SK-N-SH (cell line): ENCODE measurements at regions of chr10 and their contacts with region 1.

Region 1: DNA sequence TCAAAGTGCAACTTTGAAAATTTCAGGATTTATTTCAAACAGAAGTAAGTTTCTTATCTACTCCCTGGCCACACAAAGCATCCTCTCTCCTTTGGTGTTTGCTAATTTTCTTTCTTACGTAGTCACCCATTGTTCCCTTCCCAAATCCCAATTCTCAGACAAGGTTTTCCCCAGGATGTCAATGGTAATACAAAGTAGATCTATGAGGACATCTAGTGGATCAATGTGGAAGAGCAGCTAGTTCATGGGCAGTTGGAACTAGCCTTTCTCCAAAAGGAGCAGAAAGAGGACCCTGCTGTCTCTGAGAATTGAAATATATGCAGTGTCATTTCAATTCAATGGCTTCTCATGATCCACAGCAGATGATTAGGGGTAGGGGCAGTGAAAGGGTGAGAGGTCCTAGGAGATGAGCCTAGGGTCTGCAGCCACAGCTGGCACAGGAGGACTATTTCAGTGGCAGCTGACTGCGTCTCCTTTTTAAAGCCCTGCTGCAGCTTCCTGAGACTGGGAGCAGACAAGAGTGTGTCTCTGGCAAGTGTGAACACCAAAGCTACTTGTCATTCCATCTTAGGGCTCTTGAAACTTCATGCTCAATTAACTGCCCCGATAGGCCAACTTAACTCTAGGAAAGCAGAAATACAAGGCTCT is 632.6 kb downstream of the KCNMA1 start:
- DNase-seq: peak; percentile 52
- H3K4me3 ChIP-seq: no peak overlapping the region; a peak in 1 of 4 replicates
- H3K27ac ChIP-seq: peak overlapping the region in 1 of 2 experiments; percentile 82; a peak in 2 of 4 replicates
- H3K4me1 ChIP-seq: peaks cover 0 to 2% of the 10 kb centered on the region in 2 experiments; a peak in 2 of 4 replicates
- H3K27me3 ChIP-seq: no peaks in the 10 kb centered on the region
- CTCF ChIP-seq: peak; percentile 79
- EP300 ChIP-seq: no peak
- RAD21 ChIP-seq: peak; percentile 87

Region 2: GRCh38 chr10:76882245-76882644 is 122.8 kb before region 1 on chr10:
- CTCF ChIA-PET with region 1: no interaction called
- POLR2A ChIA-PET with region 1: no interaction called
- DNase-seq: no peak
- H3K4me3 ChIP-seq: no peak overlapping the region
- H3K27ac ChIP-seq: peak overlapping the region in 1 of 2 experiments; percentile 48; a peak in 1 of 4 replicates
- H3K4me1 ChIP-seq: peaks cover 0 to 27% of the 10 kb centered on the region in 2 experiments; a peak in 2 of 4 replicates
- H3K27me3 ChIP-seq: no peaks in the 10 kb centered on the region
- CTCF ChIP-seq: no peak
- EP300 ChIP-seq: no peak
- RAD21 ChIP-seq: no peak

Region 3: GRCh38 chr10:76962851-76963250 is 42.2 kb before region 1 on chr10:
- CTCF ChIA-PET with region 1: no interaction called
- POLR2A ChIA-PET with region 1: no interaction called
- DNase-seq: peak; percentile 19
- H3K4me3 ChIP-seq: no peak overlapping the region
- H3K27ac ChIP-seq: peak overlapping the region in 1 of 2 experiments; percentile 88; a peak in 2 of 4 replicates
- H3K4me1 ChIP-seq: peaks cover 0 to 14% of the 10 kb centered on the region in 2 experiments; a peak in 2 of 4 replicates
- H3K27me3 ChIP-seq: no peaks in the 10 kb centered on the region
- CTCF ChIP-seq: no peak
- EP300 ChIP-seq: peak in 1 of 2 experiments; percentile 79; a peak in 2 of 4 replicates
- RAD21 ChIP-seq: no peak

Region 4: DNA sequence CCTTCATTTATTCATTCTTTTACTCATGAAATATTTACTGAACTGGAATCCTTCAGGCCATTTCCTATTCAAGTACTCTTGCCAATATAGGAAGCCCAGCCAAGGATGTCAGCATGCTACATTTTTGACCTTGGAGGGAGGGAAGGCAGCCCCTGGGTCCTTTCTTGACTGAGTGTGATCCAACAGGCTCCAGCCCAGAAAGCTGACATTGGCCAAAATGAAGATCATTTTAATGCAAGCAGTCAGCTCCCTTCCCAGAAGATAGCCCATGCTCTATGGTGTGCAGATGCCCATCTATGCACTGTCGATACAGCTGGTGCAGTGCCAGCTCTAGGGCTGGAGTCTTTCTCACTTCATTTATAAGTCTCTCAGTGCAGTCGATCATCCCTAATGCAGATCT is 13.4 kb before region 1 on chr10:
- CTCF ChIA-PET with region 1: interaction called, 17 read pairs
- POLR2A ChIA-PET with region 1: no interaction called
- DNase-seq: no peak
- H3K4me3 ChIP-seq: no peak overlapping the region
- H3K27ac ChIP-seq: no peak overlapping the region
- H3K4me1 ChIP-seq: peaks cover 0 to 7% of the 10 kb centered on the region in 2 experiments; a peak in 1 of 4 replicates
- H3K27me3 ChIP-seq: no peaks in the 10 kb centered on the region
- CTCF ChIP-seq: no peak
- EP300 ChIP-seq: no peak
- RAD21 ChIP-seq: no peak

Region 5: DNA sequence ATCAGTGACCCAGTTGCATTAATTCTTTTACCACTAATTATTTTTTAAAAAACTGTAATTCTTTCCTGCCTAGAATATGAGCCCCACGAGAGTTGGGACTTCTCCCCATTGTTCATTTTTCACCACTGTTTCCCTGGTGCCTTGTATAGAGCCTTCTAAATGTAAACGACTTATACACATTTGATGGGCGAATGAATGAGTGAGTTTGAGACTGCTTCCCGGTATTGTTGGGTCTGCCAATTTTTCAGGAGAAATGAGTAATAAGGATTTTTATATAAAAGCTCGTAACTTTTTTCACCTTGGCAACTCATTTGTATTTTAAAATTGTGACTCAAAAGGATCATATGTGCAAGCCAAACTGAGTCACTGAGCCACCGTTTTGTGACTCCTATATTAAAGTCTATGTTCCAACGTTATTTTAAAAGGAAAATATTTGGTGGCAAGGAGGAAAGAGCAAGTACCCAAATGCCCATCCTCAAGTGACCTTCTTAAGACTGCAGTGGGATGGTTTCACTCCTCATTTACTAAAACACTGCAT is 11.3 kb after region 1 on chr10:
- CTCF ChIA-PET with region 1: interaction called, 22 read pairs
- POLR2A ChIA-PET with region 1: no interaction called
- DNase-seq: no peak
- H3K4me3 ChIP-seq: no peak overlapping the region
- H3K27ac ChIP-seq: peak overlapping the region in 1 of 2 experiments; percentile 99; a peak in 2 of 4 replicates
- H3K4me1 ChIP-seq: peaks cover 0 to 27% of the 10 kb centered on the region in 2 experiments; a peak in 2 of 4 replicates
- H3K27me3 ChIP-seq: no peaks in the 10 kb centered on the region
- CTCF ChIP-seq: no peak
- EP300 ChIP-seq: no peak
- RAD21 ChIP-seq: no peak

Region 6: DNA sequence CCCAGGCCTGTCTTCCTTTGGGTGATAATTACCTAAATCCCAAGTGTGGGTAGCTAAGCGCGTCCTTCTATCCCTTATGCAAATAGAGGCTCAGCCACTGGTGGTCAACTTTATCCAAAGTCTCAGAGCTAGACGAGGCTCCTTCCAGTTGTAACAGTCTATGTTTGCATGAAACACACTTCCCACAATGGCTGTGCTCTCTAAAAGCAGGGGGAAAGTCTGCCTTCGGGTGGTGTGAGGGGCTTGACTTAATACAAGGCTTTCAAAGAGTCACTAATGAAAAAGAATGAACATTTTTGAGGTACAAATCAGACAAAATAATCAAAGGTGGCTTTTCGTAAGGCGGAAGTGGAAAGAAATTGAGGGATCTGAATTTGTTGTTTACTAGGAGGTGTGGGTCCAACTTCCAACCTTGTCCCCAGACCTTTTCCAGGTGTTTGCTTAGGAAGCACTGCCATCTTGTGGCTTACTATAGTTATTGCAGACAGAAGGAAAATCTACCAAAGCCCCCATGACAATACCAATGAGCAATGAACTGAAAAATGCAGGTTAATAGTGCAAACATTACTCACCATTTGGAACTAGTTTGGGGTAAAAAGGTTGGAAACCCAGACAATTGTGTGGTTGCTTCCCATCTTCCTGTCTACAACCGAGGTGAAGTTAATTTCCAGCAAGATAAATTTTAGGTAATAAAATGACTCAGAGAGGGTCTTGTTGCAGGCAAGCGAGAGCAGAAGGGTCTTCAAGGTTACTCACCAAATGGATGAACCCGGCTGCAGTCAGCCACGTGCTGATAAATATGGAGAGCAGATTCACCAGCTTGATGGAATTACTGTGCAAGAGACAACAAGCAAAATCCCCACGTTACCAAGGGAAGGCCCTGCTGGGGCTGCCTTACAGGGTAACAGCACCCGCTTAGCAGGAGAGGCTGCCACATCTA is 106.8 kb after region 1 on chr10:
- CTCF ChIA-PET with region 1: interaction called, 12 read pairs
- POLR2A ChIA-PET with region 1: interaction called, 3 read pairs
- DNase-seq: peak; percentile 76
- H3K4me3 ChIP-seq: no peak overlapping the region; a peak in 1 of 4 replicates
- H3K27ac ChIP-seq: peak overlapping the region; percentile 70 to 89
- H3K4me1 ChIP-seq: peaks cover 5 to 24% of the 10 kb centered on the region in 2 experiments
- H3K27me3 ChIP-seq: no peaks in the 10 kb centered on the region
- CTCF ChIP-seq: peak; percentile 94
- EP300 ChIP-seq: peak; percentile 36 to 69; a peak in 2 of 4 replicates
- RAD21 ChIP-seq: peak; percentile 99

Region 7: GRCh38 chr10:77125231-77125630 is 120.2 kb after region 1 on chr10:
- CTCF ChIA-PET with region 1: no interaction called
- POLR2A ChIA-PET with region 1: no interaction called
- DNase-seq: no peak
- H3K4me3 ChIP-seq: no peak overlapping the region
- H3K27ac ChIP-seq: no peak overlapping the region
- H3K4me1 ChIP-seq: peaks cover 0 to 21% of the 10 kb centered on the region in 2 experiments; a peak in 2 of 4 replicates
- H3K27me3 ChIP-seq: no peaks in the 10 kb centered on the region
- CTCF ChIP-seq: no peak
- EP300 ChIP-seq: no peak
- RAD21 ChIP-seq: no peak